ENCODE measurements at regions of chr5 and their contacts with region 1.

Region 1: GRCh38 chr5:149357370-149358293 is at the start of gene PCYOX1L:
- DNase-seq: peak; percentile 95
- ATAC-seq: peak; percentile 99
- H3K4me3 ChIP-seq: peak within 1 kb of the TSS; percentile 38 to 82 (median 76)
- H3K4me3 Mint-ChIP-seq: peak within 1 kb of the TSS; percentile 95
- H3K27ac ChIP-seq: peak within 1 kb of the TSS; percentile 38 to 69
- H3K27ac Mint-ChIP-seq: peak within 1 kb of the TSS; percentile 85
- H3K4me1 ChIP-seq: peaks cover 12 to 15% of the 10 kb centered on the region in 2 donors
- H3K4me1 Mint-ChIP-seq: peaks cover 18% of the 10 kb centered on the region
- H3K27me3 ChIP-seq: no peaks in the 10 kb centered on the region
- H3K27me3 Mint-ChIP-seq: no peaks in the 10 kb centered on the region
- CTCF ChIP-seq: no peak
- total RNA-seq, gene PCYOX1L: 11.7 and 13.5 TPM in 2 replicates

Region 2: GRCh38 chr5:148383564-148384379 is 973.9 kb before region 1 on chr5 and contains the start of gene FBXO38:
- CTCF ChIA-PET with region 1: no interaction called
- POLR2A ChIA-PET with region 1: no interaction called
- intact Hi-C with region 1: loop called (anchors 5 kb)
- DNase-seq: peak; percentile 99
- ATAC-seq: peak; percentile 98
- H3K4me3 ChIP-seq: peak within 1 kb of the TSS; percentile 69 to 94 (median 87)
- H3K4me3 Mint-ChIP-seq: peak within 1 kb of the TSS; percentile 88
- H3K27ac ChIP-seq: peak within 1 kb of the TSS; percentile 92 to 96
- H3K27ac Mint-ChIP-seq: peak within 1 kb of the TSS; percentile 92
- H3K4me1 ChIP-seq: peaks cover 24 to 26% of the 10 kb centered on the region in 2 donors
- H3K4me1 Mint-ChIP-seq: peaks cover 51% of the 10 kb centered on the region
- H3K27me3 ChIP-seq: no peaks in the 10 kb centered on the region
- H3K27me3 Mint-ChIP-seq: no peaks in the 10 kb centered on the region
- CTCF ChIP-seq: peak; percentile 24
- total RNA-seq, gene FBXO38: 97.0 and 124 TPM in 2 replicates

Region 3: DNA sequence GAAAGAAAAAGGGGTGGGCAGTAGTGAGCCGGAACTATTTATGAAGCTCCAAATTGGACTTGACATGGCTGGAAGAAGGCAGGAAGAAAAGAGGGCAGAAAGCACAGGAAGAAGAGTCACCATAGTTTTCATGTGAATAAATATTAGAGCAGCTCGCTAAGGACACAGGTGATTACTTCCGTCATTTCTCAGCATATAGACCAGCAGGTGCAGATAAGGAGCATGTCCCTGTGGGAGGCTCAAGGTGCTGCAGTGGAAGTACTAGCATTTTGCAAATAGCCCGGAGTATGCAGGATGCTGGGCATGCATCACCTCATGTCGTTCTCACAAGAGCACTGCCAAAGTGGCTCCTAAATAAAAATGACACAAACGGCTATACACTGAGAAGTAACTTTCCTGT is 632.0 kb before region 1 on chr5:
- CTCF ChIA-PET with region 1: no interaction called
- POLR2A ChIA-PET with region 1: no interaction called
- intact Hi-C with region 1: no loop called
- DNase-seq: no peak
- ATAC-seq: no peak
- H3K4me3 ChIP-seq: no peak overlapping the region
- H3K4me3 Mint-ChIP-seq: no peak overlapping the region
- H3K27ac ChIP-seq: no peak overlapping the region
- H3K27ac Mint-ChIP-seq: no peak overlapping the region
- H3K4me1 ChIP-seq: no peaks in the 10 kb centered on the region
- H3K4me1 Mint-ChIP-seq: no peaks in the 10 kb centered on the region
- H3K27me3 ChIP-seq: no peaks in the 10 kb centered on the region
- H3K27me3 Mint-ChIP-seq: peaks cover 21% of the 10 kb centered on the region
- CTCF ChIP-seq: no peak

Region 4: GRCh38 chr5:149345147-149345875 is 12.3 kb before region 1 on chr5 and contains the start of gene GRPEL2:
- CTCF ChIA-PET with region 1: interaction called, 13 read pairs
- POLR2A ChIA-PET with region 1: interaction called, 4 read pairs
- intact Hi-C with region 1: loop called (anchors 1 kb)
- DNase-seq: peak; percentile 88
- ATAC-seq: peak; percentile 90
- H3K4me3 ChIP-seq: peak within 1 kb of the TSS; percentile 62 to 88 (median 77)
- H3K4me3 Mint-ChIP-seq: peak within 1 kb of the TSS; percentile 87
- H3K27ac ChIP-seq: peak within 1 kb of the TSS; percentile 53 to 63
- H3K27ac Mint-ChIP-seq: peak within 1 kb of the TSS; percentile 83
- H3K4me1 ChIP-seq: peaks cover 11 to 22% of the 10 kb centered on the region in 2 donors
- H3K4me1 Mint-ChIP-seq: peaks cover 29% of the 10 kb centered on the region
- H3K27me3 ChIP-seq: no peaks in the 10 kb centered on the region
- H3K27me3 Mint-ChIP-seq: no peaks in the 10 kb centered on the region
- CTCF ChIP-seq: no peak
- total RNA-seq, gene GRPEL2: 12.1 and 12.5 TPM in 2 replicates

Region 5: GRCh38 chr5:149765932-149766331 is 408.3 kb after region 1 on chr5:
- CTCF ChIA-PET with region 1: no interaction called
- POLR2A ChIA-PET with region 1: no interaction called
- intact Hi-C with region 1: no loop called
- DNase-seq: no peak
- ATAC-seq: no peak
- H3K4me3 ChIP-seq: no peak overlapping the region
- H3K4me3 Mint-ChIP-seq: no peak overlapping the region
- H3K27ac ChIP-seq: no peak overlapping the region
- H3K27ac Mint-ChIP-seq: no peak overlapping the region
- H3K4me1 ChIP-seq: no peaks in the 10 kb centered on the region
- H3K4me1 Mint-ChIP-seq: no peaks in the 10 kb centered on the region
- H3K27me3 ChIP-seq: no peaks in the 10 kb centered on the region
- H3K27me3 Mint-ChIP-seq: no peaks in the 10 kb centered on the region
- CTCF ChIP-seq: no peak

Region 6: GRCh38 chr5:149990518-149991376 is 633.1 kb after region 1 on chr5:
- CTCF ChIA-PET with region 1: no interaction called
- POLR2A ChIA-PET with region 1: no interaction called
- intact Hi-C with region 1: loop called (anchors 10 kb)
- DNase-seq: peak; percentile 77
- ATAC-seq: peak; percentile 97
- H3K4me3 ChIP-seq: no peak overlapping the region
- H3K4me3 Mint-ChIP-seq: no peak overlapping the region
- H3K27ac ChIP-seq: no peak overlapping the region
- H3K27ac Mint-ChIP-seq: no peak overlapping the region
- H3K4me1 ChIP-seq: no peaks in the 10 kb centered on the region
- H3K4me1 Mint-ChIP-seq: no peaks in the 10 kb centered on the region
- H3K27me3 ChIP-seq: no peaks in the 10 kb centered on the region
- H3K27me3 Mint-ChIP-seq: no peaks in the 10 kb centered on the region
- CTCF ChIP-seq: peak; percentile 97